ENCODE measurements at regions of chr1 and their contacts with region 1.

Region 1: DNA sequence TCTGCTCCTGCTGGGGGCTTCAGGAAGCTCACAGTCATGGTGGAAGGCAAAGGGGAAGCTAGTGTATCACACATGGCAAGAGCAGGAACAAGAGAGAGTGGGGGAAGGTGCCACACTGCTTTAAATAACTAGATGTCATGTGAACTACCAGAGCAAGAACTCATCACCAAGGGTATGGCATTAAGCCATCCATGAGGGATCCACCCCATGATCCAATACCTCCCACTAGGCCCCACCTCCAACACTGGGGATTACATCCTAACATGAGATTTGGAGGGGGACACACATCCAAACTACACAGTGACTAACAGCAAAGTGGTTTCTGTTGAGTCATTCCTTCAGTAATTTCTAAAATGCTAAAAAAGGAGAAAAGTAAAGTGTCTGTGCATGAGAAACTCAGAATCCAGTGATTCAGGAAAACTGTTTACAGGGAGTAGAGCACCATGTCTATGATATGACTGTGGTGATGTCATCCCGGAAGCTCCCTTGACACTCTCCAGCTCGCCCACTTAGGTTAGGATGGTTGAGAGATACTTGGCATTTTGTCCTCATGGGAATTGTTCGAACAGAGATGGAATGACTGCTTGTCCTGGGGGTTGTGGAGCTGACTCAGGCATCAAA is 50.3 kb downstream of the CHD1L start:
- DNase-seq: peak; percentile 98
- H3K4me3 ChIP-seq: peak overlapping the region; percentile 51
- H3K27ac ChIP-seq: peak overlapping the region; percentile 100
- H3K4me1 ChIP-seq: peaks cover 20% of the 10 kb centered on the region
- H3K27me3 ChIP-seq: no peaks in the 10 kb centered on the region

Region 2: DNA sequence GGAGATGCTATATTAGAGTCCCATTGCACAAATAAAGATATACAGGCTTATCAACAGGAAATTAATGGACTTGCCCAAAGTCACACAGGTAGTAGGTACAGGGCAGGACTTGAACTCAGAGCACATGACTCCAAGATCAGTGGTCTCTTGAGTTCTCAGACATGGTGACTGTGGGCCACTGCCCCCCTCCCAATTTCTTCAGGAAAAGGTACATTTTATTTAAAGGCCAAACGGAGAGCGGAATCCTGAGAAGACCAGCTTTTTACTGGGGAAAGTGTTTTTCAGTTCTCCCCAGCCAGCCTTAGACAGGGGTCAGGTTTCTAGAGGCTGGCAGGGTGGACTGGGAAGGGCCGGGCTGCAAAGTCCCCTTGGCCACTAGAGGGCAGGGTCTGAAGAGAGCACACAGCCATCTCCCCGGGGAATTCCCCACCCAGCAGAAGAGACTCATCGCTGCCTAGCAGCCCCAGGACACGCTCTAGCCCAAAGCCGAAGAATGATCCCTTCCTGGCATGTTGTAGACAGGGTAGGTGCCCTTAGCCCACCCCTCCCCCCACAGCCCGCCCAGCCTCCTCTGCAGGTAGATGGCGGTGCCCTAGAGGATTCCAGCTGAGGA is 347.9 kb after region 1 on chr1:
- in situ Hi-C with region 1: loop called (anchors 25 kb)
- DNase-seq: peak; percentile 95
- H3K4me3 ChIP-seq: no peak overlapping the region
- H3K27ac ChIP-seq: no peak overlapping the region
- H3K4me1 ChIP-seq: no peaks in the 10 kb centered on the region
- H3K27me3 ChIP-seq: no peaks in the 10 kb centered on the region

Measured in GM23248 (cell line).